ENCODE measurements at regions of chr3 and their contacts with region 1.

Region 1: DNA sequence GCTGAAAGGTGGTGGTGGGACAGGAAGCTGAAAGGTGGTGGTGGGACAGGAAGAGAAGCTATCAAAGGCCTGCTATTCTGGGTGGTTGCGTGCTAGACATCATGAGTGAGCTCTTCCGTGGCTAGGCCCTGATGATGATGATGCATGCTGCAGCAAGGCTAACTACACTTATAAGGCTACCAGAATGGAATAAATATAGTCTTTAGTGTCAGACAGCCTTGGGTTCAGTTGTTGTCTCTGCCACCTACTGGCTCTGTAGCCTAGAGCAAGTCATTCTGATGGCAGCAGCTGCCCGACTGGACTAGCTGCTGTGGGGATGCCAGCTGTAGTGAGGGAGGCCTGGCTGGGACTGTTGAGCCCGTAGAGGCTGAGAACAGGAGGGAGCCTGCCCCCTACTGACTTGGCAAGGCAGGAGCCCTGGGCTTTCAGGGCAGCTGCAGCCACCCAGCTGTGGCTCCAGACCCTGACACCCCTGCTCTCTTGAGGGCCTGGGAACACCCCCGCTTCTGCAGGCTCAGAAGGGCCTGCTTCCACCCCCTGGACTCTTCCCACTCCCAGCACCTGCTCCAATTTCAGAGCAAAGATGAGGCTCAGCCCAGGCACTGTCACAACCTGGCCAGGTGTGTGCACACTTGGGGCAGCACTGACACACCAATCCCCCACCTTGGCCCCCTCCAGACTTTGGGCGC is 21.4 kb upstream of the ZBED2 start:
- DNase-seq: peak in 13 of 14 experiments; percentile 16 to 88 (median 46)
- ATAC-seq: peak; percentile 94
- H3K4me3 ChIP-seq: no peak overlapping the region
- H3K4me3 Mint-ChIP-seq: peak overlapping the region; percentile 26
- H3K27ac ChIP-seq: peak overlapping the region; percentile 27 to 60
- H3K27ac Mint-ChIP-seq: peak overlapping the region; percentile 86
- H3K4me1 ChIP-seq: peaks cover 32% of the 10 kb centered on the region
- H3K4me1 Mint-ChIP-seq: peaks cover 60% of the 10 kb centered on the region
- H3K27me3 ChIP-seq: no peaks in the 10 kb centered on the region
- H3K27me3 Mint-ChIP-seq: no peaks in the 10 kb centered on the region
- CTCF ChIP-seq: peak; percentile 31

Region 2: DNA sequence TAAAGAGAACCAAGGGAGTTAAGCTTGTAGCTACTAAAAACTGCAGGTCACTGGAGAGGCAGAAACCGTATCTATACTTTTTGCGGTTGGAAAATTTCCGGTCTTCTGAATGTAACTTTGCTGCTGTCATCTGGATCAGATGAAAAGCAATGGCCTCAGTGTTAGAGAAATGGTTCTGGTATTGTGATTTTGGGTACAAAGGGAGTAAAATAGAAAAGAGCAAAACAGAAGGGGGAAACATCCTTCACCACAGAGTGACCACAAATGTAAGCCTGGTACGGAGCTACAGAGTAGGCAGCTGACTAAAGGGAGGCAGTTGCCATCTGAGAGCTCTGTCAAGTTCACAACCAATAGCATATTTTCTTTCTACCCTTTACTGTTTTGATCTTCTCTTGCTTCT is 68.9 kb before region 1 on chr3:
- CTCF ChIA-PET with region 1: interaction called, 21 read pairs
- POLR2A ChIA-PET with region 1: interaction called, 10 read pairs
- intact Hi-C with region 1: loop called in 1 of 2 experiments (anchors 1 kb)
- DNase-seq: peak in 12 of 14 experiments; percentile 12 to 82 (median 35)
- ATAC-seq: peak; percentile 82
- H3K4me3 ChIP-seq: peak overlapping the region; percentile 40
- H3K4me3 Mint-ChIP-seq: no peak overlapping the region
- H3K27ac ChIP-seq: peak overlapping the region; percentile 69 to 81
- H3K27ac Mint-ChIP-seq: no peak overlapping the region
- H3K4me1 ChIP-seq: peaks cover 54% of the 10 kb centered on the region
- H3K4me1 Mint-ChIP-seq: no peaks in the 10 kb centered on the region
- H3K27me3 ChIP-seq: no peaks in the 10 kb centered on the region
- H3K27me3 Mint-ChIP-seq: no peaks in the 10 kb centered on the region
- CTCF ChIP-seq: no peak

Region 3: GRCh38 chr3:111577794-111578685 is 38.5 kb before region 1 on chr3:
- CTCF ChIA-PET with region 1: interaction called, 33 read pairs
- POLR2A ChIA-PET with region 1: no interaction called
- intact Hi-C with region 1: loop called in 1 of 2 experiments (anchors 2 kb)
- DNase-seq: peak in 3 of 14 experiments; percentile 48 to 58 (median 50)
- ATAC-seq: peak; percentile 85
- H3K4me3 ChIP-seq: no peak overlapping the region
- H3K4me3 Mint-ChIP-seq: no peak overlapping the region
- H3K27ac ChIP-seq: no peak overlapping the region
- H3K27ac Mint-ChIP-seq: peak overlapping the region; percentile 24
- H3K4me1 ChIP-seq: no peaks in the 10 kb centered on the region
- H3K4me1 Mint-ChIP-seq: peaks cover 75% of the 10 kb centered on the region
- H3K27me3 ChIP-seq: no peaks in the 10 kb centered on the region
- H3K27me3 Mint-ChIP-seq: no peaks in the 10 kb centered on the region
- CTCF ChIP-seq: peak; percentile 17

Region 4: GRCh38 chr3:111604119-111604518 is 12.4 kb before region 1 on chr3:
- CTCF ChIA-PET with region 1: interaction called, 25 read pairs
- POLR2A ChIA-PET with region 1: no interaction called
- intact Hi-C with region 1: no loop called
- DNase-seq: no peak
- ATAC-seq: no peak
- H3K4me3 ChIP-seq: no peak overlapping the region
- H3K4me3 Mint-ChIP-seq: no peak overlapping the region
- H3K27ac ChIP-seq: no peak overlapping the region
- H3K27ac Mint-ChIP-seq: peak overlapping the region; percentile 21
- H3K4me1 ChIP-seq: peaks cover 7% of the 10 kb centered on the region
- H3K4me1 Mint-ChIP-seq: peaks cover 56% of the 10 kb centered on the region
- H3K27me3 ChIP-seq: no peaks in the 10 kb centered on the region
- H3K27me3 Mint-ChIP-seq: no peaks in the 10 kb centered on the region
- CTCF ChIP-seq: no peak

Region 5: DNA sequence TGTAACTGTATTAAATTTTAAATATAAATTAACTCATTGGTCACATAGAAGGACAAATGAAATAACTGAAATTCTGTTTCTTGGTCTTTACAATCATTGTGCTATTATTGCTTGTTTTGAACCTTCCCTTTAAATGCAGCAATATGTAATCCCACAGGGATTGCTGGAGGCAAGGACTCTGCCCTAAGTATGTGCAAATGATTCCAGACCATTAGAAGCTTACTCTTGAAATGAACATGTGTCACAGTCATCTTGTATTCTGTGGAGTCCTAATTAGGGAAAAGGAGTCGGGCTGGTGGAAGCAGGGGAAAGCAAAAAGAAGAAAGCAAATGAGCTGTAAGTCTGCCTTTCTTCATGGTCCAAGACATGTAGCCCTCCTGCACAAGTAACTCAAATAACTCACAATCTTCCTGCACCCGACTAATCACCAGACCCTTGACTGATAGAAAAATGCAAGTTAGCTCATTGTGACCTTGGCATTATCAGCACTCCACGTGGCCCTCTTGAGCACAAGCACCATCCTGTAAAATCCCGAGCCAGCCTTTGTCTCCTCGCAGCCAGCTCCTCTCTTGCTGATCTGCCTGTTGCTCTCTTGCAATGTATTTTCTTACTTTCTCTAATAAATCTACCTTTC is 415.7 kb after region 1 on chr3:
- CTCF ChIA-PET with region 1: no interaction called
- POLR2A ChIA-PET with region 1: no interaction called
- intact Hi-C with region 1: no loop called
- DNase-seq: no peak
- ATAC-seq: no peak
- H3K4me3 ChIP-seq: no peak overlapping the region
- H3K4me3 Mint-ChIP-seq: no peak overlapping the region
- H3K27ac ChIP-seq: no peak overlapping the region
- H3K27ac Mint-ChIP-seq: no peak overlapping the region
- H3K4me1 ChIP-seq: no peaks in the 10 kb centered on the region
- H3K4me1 Mint-ChIP-seq: no peaks in the 10 kb centered on the region
- H3K27me3 ChIP-seq: no peaks in the 10 kb centered on the region
- H3K27me3 Mint-ChIP-seq: no peaks in the 10 kb centered on the region
- CTCF ChIP-seq: no peak

Measured in CD4-positive, alpha-beta T cell (primary cell).